ENCODE measurements at regions of chr6 and their contacts with region 1.

Region 1: DNA sequence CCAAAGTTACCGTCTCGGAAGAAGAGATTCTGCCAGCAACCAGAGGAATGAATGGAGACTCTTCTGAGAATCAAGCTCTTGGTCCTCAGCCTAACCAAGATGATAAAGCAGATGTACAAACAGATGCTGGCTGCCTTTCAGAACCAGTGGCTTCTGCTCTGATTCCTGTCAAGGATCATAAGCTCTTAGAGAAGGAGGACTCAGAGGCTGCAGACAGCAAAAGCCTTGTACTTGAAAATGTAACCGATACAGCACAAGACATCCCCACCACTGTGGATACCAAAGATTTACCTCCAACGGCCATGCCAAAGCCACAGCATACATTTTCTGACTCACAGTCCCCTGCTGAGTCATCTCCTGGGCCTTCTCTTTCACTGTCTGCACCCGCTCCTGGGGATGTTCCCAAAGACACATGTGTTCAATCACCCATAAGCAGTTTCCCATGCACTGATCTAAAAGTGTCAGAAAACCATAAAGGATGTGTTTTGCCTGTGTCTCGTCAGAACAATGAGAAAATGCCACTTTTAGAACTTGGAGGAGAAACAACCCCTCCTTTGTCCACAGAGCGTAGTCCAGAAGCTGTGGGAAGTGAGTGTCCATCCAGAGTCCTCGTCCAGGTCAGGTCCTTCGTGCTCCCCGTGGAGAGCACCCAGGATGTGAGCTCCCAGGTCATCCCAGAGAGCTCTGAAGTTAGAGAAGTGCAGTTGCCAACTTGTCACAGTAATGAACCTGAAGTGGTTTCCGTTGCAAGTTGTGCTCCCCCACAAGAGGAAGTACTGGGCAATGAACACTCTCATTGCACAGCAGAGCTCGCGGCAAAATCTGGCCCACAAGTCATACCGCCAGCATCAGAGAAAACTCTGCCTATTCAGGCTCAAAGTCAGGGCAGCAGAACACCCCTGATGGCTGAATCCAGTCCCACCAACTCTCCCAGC is 109.6 kb downstream of the RTN4IP1 start:
- DNase-seq: peak; percentile 74
- H3K4me3 Mint-ChIP-seq: peak overlapping the region; percentile 90
- H3K27ac Mint-ChIP-seq: peak overlapping the region; percentile 98
- H3K4me1 Mint-ChIP-seq: peaks cover 79% of the 10 kb centered on the region
- H3K27me3 Mint-ChIP-seq: no peaks in the 10 kb centered on the region

Region 2: GRCh38 chr6:104789770-104790190 is 1729.9 kb before region 1 on chr6:
- intact Hi-C with region 1: loop called (anchors 10 kb)
- DNase-seq: no peak
- H3K4me3 Mint-ChIP-seq: peak overlapping the region; percentile 62
- H3K27ac Mint-ChIP-seq: peak overlapping the region; percentile 85
- H3K4me1 Mint-ChIP-seq: peaks cover 42% of the 10 kb centered on the region
- H3K27me3 Mint-ChIP-seq: no peaks in the 10 kb centered on the region

Region 3: GRCh38 chr6:105793130-105793529 is 726.6 kb before region 1 on chr6:
- intact Hi-C with region 1: loop called (anchors 10 kb)
- DNase-seq: no peak
- H3K4me3 Mint-ChIP-seq: peak overlapping the region; percentile 5
- H3K27ac Mint-ChIP-seq: peak overlapping the region; percentile 66
- H3K4me1 Mint-ChIP-seq: peaks cover 86% of the 10 kb centered on the region
- H3K27me3 Mint-ChIP-seq: no peaks in the 10 kb centered on the region

Region 4: GRCh38 chr6:106184629-106185028 is 335.1 kb before region 1 on chr6:
- intact Hi-C with region 1: loop called (anchors 5 kb)
- DNase-seq: no peak
- H3K4me3 Mint-ChIP-seq: no peak overlapping the region
- H3K27ac Mint-ChIP-seq: no peak overlapping the region
- H3K4me1 Mint-ChIP-seq: peaks cover 70% of the 10 kb centered on the region
- H3K27me3 Mint-ChIP-seq: no peaks in the 10 kb centered on the region

Region 5: DNA sequence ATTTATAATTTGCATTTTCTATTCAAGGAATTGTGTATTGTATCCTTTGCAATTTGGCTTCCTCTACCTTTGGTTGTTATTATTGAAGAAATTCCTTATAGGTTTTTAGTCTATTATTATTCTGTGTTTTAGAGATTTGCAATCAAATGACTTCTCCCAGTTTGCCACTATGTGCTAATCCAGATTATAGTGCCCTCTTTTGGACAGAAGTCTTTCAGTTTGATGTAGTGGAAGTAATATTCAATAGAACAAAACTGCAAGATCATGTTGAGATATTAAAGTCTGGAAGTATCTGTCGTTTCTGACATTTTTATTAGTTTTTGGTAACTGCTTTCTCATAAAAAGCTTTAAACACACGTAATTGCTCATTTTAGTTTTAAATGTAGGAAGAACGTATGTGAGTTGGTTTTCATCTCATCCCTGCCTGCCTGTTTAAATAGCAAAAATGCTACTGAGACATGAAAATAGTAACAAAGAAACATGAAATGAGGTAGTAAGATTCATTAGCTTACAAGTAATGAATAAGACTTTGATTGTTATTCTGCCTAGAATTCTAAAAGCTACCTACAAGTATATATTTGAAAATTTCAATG is 36.7 kb after region 1 on chr6:
- intact Hi-C with region 1: loop called (anchors 1 kb)
- DNase-seq: no peak
- H3K4me3 Mint-ChIP-seq: no peak overlapping the region
- H3K27ac Mint-ChIP-seq: no peak overlapping the region
- H3K4me1 Mint-ChIP-seq: peaks cover 23% of the 10 kb centered on the region
- H3K27me3 Mint-ChIP-seq: no peaks in the 10 kb centered on the region

Region 6: GRCh38 chr6:106715922-106716321 is 196.2 kb after region 1 on chr6:
- intact Hi-C with region 1: no loop called
- DNase-seq: no peak
- H3K4me3 Mint-ChIP-seq: no peak overlapping the region
- H3K27ac Mint-ChIP-seq: no peak overlapping the region
- H3K4me1 Mint-ChIP-seq: no peaks in the 10 kb centered on the region
- H3K27me3 Mint-ChIP-seq: peaks cover 4% of the 10 kb centered on the region

Region 7: DNA sequence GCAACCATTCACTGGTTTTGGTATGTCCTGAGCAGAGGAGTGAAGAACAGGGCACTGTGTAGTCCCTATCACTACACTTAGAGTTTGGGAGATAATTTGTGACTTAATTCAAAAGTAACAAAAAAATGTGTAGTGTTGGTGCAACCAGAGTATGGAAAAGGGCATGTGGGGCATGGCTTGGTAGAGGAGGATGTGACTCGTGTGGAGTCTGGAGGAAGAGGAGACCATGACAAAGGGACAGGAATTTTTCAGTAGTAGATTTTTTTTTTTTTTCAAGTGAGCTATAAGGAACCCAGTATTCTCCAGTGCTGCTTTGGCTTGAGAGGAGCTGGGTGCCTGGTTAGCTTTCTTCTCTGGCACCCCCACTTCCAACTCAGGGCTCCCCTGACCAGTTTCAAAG is 513.4 kb after region 1 on chr6:
- intact Hi-C with region 1: loop called (anchors 1 kb)
- DNase-seq: no peak
- H3K4me3 Mint-ChIP-seq: no peak overlapping the region
- H3K27ac Mint-ChIP-seq: peak overlapping the region; percentile 25
- H3K4me1 Mint-ChIP-seq: peaks cover 20% of the 10 kb centered on the region
- H3K27me3 Mint-ChIP-seq: no peaks in the 10 kb centered on the region

Region 8: GRCh38 chr6:107459283-107460082 is 939.8 kb after region 1 on chr6 and contains the start of gene PDSS2:
- intact Hi-C with region 1: loop called (anchors 10 kb)
- DNase-seq: peak; percentile 95
- H3K4me3 Mint-ChIP-seq: peak within 1 kb of the TSS; percentile 93
- H3K27ac Mint-ChIP-seq: peak within 1 kb of the TSS; percentile 91
- H3K4me1 Mint-ChIP-seq: peaks cover 16% of the 10 kb centered on the region
- H3K27me3 Mint-ChIP-seq: no peaks in the 10 kb centered on the region
- total RNA-seq, gene PDSS2: 11.8 and 14.5 TPM in 2 replicates